Right ventricle myocardium inferior (tissue), 1 donor: ENCODE measurements at regions of chr6 and their contacts with region 1.

Region 1: GRCh38 chr6:17803409-17803808 is 96.7 kb upstream of the NUP153 start:
- DNase-seq: no peak
- ATAC-seq: no peak

Region 2: GRCh38 chr6:17156112-17156921 is 647.1 kb before region 1 on chr6:
- intact Hi-C with region 1: loop called (anchors 5 kb)
- DNase-seq: no peak
- ATAC-seq: no peak

Region 3: DNA sequence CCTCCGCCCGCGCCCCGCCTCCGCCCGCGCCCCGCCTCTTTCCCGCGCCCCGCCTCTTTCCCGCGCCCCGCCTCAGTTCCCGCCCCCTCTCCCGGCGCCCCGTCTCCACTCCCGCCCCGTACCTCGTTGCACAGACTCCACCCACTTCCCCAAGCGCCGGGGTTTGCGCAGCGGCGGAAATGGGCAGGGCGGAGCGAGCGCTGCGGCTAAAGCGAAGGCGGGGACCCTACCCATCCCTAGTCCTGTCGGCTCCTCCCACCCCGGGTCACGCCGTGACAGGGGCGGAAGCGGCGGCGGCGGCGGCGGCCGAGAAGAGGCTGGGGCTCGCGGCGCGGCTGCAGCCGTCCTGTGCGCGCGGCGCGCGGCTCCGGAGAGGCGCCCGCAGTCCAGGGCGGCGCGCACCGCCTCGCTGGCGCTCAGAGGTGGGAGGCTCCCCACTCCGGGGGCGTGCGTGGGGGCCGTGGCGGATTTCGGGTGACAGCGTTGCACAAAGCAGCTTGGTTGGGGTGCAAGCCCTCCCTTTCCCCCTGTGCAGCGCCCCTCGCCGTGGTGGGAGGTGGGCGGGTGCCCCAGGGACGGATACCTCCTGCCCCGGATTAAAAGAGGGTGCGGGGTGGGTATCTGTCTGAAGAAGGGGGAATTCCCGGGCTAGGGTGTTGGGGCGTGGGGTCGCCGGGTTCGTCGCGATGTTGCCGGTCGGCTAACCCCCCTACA is 351.9 kb after region 1 on chr6 and contains the start of gene KDM1B:
- intact Hi-C with region 1: no loop called
- DNase-seq: peak; percentile 99
- ATAC-seq: peak; percentile 99
- total RNA-seq, gene KDM1B: 13.0 TPM

Region 4: DNA sequence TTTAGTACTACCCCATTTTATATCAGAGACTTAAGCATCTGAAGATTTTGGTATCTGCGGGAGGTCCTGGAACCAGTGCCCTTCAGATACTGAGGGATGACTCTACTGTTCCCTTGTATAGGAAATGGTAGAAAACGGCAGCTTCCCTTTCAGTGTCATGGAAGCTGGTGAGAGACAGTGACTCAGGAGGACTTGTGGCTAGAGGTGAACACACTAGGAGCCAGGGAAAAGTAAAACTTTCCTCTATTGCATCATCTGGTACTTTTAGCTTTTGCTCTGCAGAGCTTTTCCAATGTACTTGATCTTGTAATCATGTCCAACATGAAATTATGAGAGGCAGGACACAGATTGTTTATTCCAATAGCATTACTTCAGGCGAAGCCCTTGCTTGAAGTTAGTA is 628.8 kb after region 1 on chr6:
- intact Hi-C with region 1: no loop called
- DNase-seq: no peak
- ATAC-seq: no peak